Breast epithelium (tissue), 4 donors: ENCODE measurements at regions of chr15 and their contacts with region 1.

Region 1: DNA sequence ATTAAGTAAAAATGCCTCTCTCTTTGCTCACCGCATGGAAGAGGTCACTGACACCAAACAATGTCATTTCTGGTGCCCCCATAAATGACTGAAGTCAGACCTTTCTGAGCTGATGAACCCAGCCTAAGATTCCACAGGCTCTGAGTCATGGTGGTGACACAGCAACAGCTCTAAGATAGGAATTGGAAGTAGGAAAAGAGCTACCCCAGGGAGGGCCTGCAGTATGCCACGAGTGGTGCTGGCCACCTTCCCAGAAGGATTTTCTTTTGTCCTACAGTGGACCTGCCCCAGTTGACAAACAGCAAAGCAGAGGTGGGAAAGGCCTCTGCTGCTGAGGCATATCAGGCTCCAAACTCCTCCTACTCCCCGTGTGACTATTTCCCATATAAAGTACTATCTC is 208.1 kb downstream of the MINAR1 start:
- DNase-seq: no peak
- H3K4me3 ChIP-seq: no peak overlapping the region
- H3K27ac ChIP-seq: no peak overlapping the region
- H3K4me1 ChIP-seq: no peaks in the 10 kb centered on the region
- H3K27me3 ChIP-seq: peaks cover 0 to 6% of the 10 kb centered on the region in 2 donors
- CTCF ChIP-seq: no peak
- POLR2A ChIP-seq: no peak

Region 2: DNA sequence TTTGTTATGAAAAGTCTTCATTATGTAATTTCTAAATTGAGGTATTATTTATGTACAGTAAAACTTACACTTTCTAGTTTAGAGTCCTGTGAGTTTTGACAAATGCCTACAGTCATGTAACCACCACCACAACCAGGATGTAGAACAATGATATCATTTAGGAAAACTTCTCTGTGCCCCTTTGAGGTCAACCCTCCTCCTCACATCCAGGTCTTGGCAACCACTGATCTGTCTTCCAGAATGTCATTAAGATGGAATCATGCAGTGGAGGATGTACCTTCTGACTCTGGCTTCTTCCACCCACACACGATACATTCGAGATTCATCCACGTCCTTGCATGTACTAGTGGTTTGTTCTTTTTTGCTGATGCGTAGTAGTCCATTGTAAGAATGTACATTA is 184.8 kb before region 1 on chr15:
- intact Hi-C with region 1: loop called (anchors 5 kb)
- DNase-seq: no peak
- H3K4me3 ChIP-seq: no peak overlapping the region
- H3K27ac ChIP-seq: no peak overlapping the region
- H3K4me1 ChIP-seq: no peaks in the 10 kb centered on the region
- H3K27me3 ChIP-seq: peaks cover 0 to 2% of the 10 kb centered on the region in 2 donors
- CTCF ChIP-seq: no peak
- POLR2A ChIP-seq: no peak

Region 3: DNA sequence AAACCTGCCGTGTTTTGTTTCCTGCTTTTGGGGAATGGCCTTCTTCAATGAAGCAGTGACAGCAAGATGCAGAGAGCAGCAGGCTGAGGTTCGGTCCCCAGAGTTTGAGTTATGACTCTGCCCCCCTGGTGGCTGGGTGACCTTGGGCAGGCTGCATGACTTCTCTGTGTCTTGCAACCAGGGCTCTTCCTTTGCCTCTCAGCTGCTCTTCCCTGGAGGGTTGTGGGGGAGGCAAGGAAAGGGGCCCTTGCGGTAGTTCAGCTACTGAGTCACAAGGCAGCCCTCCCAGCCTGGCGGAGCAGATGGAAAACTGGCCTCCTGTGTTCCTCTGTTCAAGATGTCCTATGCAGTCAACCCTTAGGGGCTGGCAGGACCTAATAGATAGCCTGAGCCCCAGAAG is 594.7 kb after region 1 on chr15:
- intact Hi-C with region 1: loop called (anchors 5 kb)
- DNase-seq: no peak
- H3K4me3 ChIP-seq: no peak overlapping the region
- H3K27ac ChIP-seq: no peak overlapping the region
- H3K4me1 ChIP-seq: no peaks in the 10 kb centered on the region
- H3K27me3 ChIP-seq: peaks cover 0 to 18% of the 10 kb centered on the region in 2 donors
- CTCF ChIP-seq: peak in 1 of 3 donors; percentile 22
- POLR2A ChIP-seq: no peak